ENCODE measurements at regions of chr12 and their contacts with region 1.

Region 1: GRCh38 chr12:120797677-120798642 is 72.3 kb downstream of the ACADS start:
- DNase-seq: peak; percentile 28
- H3K4me3 Mint-ChIP-seq: no peak overlapping the region
- H3K27ac Mint-ChIP-seq: peak overlapping the region; percentile 89
- H3K4me1 Mint-ChIP-seq: peaks cover 47% of the 10 kb centered on the region
- H3K27me3 Mint-ChIP-seq: no peaks in the 10 kb centered on the region

Region 2: GRCh38 chr12:120012067-120012621 is 785.8 kb before region 1 on chr12:
- CTCF ChIA-PET with region 1: no interaction called
- intact Hi-C with region 1: no loop called
- DNase-seq: peak; percentile 94
- H3K4me3 Mint-ChIP-seq: peak overlapping the region; percentile 73
- H3K27ac Mint-ChIP-seq: peak overlapping the region; percentile 97
- H3K4me1 Mint-ChIP-seq: peaks cover 87% of the 10 kb centered on the region
- H3K27me3 Mint-ChIP-seq: no peaks in the 10 kb centered on the region

Region 3: GRCh38 chr12:120820885-120821510 is 23.0 kb after region 1 on chr12:
- CTCF ChIA-PET with region 1: no interaction called
- intact Hi-C with region 1: loop called (anchors 2 kb)
- DNase-seq: peak; percentile 49
- H3K4me3 Mint-ChIP-seq: peak overlapping the region; percentile 23
- H3K27ac Mint-ChIP-seq: peak overlapping the region; percentile 22
- H3K4me1 Mint-ChIP-seq: peaks cover 44% of the 10 kb centered on the region
- H3K27me3 Mint-ChIP-seq: no peaks in the 10 kb centered on the region

Region 4: DNA sequence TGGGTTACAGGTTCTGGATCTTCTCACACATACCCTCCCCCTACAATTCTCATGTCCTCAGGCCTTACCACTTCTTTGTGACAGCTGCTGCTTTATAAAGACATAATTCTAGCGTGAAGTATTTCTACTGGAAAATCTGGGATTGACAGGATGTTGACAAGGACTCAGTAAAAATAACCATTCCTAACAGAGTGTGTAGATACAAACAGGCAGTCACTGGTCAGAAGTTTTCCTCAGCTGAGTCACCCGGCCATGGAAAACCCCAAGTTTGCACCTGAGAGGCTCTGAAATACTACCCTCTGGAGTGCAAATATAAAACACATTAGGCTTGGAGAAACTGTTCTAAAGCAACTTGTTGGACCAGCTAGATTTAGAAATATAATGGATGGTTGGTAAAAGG is 51.8 kb after region 1 on chr12:
- CTCF ChIA-PET with region 1: interaction called, 3 read pairs
- intact Hi-C with region 1: loop called (anchors 5 kb)
- DNase-seq: peak; percentile 59
- H3K4me3 Mint-ChIP-seq: no peak overlapping the region
- H3K27ac Mint-ChIP-seq: no peak overlapping the region
- H3K4me1 Mint-ChIP-seq: peaks cover 60% of the 10 kb centered on the region
- H3K27me3 Mint-ChIP-seq: no peaks in the 10 kb centered on the region

Region 5: GRCh38 chr12:120961604-120962531 is 163.9 kb after region 1 on chr12:
- CTCF ChIA-PET with region 1: no interaction called
- intact Hi-C with region 1: loop called (anchors 1 kb)
- DNase-seq: peak; percentile 23
- H3K4me3 Mint-ChIP-seq: no peak overlapping the region
- H3K27ac Mint-ChIP-seq: peak overlapping the region; percentile 50
- H3K4me1 Mint-ChIP-seq: peaks cover 42% of the 10 kb centered on the region
- H3K27me3 Mint-ChIP-seq: no peaks in the 10 kb centered on the region